ENCODE measurements at regions of chr3 and their contacts with region 1.

Region 1: DNA sequence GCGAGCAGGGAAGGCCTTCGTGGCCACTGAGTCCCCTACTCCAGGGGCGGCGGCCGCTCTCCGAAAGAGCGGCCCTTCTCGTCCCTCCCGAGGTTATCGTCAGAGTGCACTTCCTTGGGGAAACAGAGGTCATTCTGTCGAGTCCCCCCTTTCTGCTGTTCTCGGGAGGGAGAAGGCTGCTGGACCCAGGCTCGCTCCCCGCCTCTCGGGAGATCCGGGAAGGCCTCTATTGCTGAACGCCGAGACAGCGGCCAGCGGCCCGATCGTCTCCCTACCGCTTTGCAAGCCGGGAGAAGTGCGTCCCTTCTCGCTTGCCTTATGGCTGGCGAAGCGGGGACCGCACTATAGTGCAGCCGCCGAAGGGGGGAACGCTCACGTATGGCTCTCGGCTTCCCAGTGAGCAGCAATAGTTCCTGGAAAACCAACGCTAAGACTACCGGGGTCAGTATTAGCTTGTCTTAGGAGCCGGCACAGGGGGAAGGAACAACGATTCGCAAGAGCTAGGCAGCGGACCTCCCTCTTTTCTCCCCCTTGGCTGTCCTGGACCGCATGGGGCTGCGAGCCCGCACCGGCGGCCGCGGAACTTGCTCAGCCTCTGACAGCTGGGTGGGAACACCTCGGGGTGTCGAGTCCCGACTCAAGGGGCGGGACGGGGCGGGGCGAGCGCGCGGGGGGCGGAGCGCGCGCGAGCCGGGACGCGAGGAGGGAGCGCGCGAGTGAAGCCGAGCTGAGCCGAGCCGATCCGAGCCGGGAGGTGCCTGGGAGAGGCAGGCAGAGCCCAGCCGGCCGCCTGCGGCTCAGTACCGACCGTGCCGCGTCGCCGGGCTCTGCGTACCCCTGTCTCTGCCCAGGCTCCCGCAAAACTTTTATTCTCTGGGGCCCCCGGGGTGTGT is 930 bp upstream of the PPM1L start:
- DNase-seq: peak; percentile 80 to 95 (median 88)
- ATAC-seq: peak; percentile 85
- H3K4me3 ChIP-seq: peak overlapping the region; percentile 93
- H3K4me3 Mint-ChIP-seq: peak overlapping the region; percentile 94
- H3K27ac ChIP-seq: peak overlapping the region; percentile 51 to 81
- H3K27ac Mint-ChIP-seq: peak overlapping the region; percentile 89
- H3K4me1 ChIP-seq: peaks cover 27% of the 10 kb centered on the region
- H3K4me1 Mint-ChIP-seq: peaks cover 42% of the 10 kb centered on the region
- H3K27me3 ChIP-seq: peaks cover 7% of the 10 kb centered on the region in 2 experiments
- H3K27me3 Mint-ChIP-seq: peaks cover 21% of the 10 kb centered on the region
- CTCF ChIP-seq: no peak

Region 2: DNA sequence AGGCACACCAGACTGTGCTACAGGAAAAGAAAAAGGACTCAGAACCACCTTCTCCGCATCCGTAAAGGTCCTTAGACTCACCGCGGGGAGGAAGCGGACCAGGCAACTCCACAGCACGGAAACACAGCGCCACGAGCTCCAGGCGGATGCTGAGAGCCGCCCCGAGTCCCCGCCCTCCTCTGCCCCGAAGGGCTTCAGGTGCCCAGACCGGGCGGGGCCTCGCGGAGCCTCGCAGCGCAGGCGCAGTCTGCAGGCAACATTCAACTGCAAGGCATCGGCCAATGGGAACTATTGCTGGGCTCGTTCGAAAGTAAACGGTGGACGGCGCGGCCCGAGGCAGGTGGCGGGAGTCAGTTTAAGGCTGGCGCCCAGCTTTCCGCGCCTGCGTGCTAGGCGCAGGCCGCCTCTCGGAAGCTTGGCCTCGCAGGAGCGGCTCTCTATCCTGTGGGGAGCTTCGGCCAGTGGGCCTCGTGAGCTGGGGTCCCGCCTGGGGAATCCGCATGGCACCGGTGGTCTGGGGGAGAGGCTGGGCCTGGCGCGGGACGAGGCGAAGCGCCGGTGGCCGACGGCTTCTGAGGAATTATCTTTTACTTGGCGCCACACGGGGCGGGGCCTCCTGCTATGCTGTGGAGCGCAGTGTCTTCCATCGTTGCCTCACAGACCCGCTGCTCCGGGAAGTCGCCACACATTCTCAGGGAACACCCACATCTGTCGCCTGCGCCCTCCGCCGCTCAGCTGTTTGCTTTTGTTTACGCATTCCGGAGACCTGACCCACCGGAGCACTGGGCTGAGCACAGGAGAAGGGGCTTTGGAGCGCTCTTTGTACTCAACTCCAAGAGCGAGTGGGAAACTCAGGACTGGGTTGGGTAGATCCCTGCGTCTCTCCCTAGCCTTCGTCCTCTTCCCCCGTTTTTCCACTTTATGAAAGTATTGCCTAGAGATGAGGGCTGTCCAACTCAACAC is 305.2 kb before region 1 on chr3 and contains the start of gene TRIM59:
- CTCF ChIA-PET with region 1: no interaction called
- POLR2A ChIA-PET with region 1: interaction called, 9 read pairs
- intact Hi-C with region 1: loop called in 1 of 2 experiments (anchors 5 kb)
- DNase-seq: peak; percentile 91 to 99 (median 96)
- ATAC-seq: peak; percentile 97
- H3K4me3 ChIP-seq: peak within 1 kb of the TSS; percentile 81
- H3K4me3 Mint-ChIP-seq: peak within 1 kb of the TSS; percentile 95
- H3K27ac ChIP-seq: peak within 1 kb of the TSS; percentile 74 to 84
- H3K27ac Mint-ChIP-seq: peak within 1 kb of the TSS; percentile 95
- H3K4me1 ChIP-seq: peaks cover 22% of the 10 kb centered on the region
- H3K4me1 Mint-ChIP-seq: peaks cover 38% of the 10 kb centered on the region
- H3K27me3 ChIP-seq: no peaks in the 10 kb centered on the region
- H3K27me3 Mint-ChIP-seq: no peaks in the 10 kb centered on the region
- CTCF ChIP-seq: no peak
- total RNA-seq, gene TRIM59: 16.2 to 16.4 TPM

Region 3: GRCh38 chr3:161220850-161221753 is 466.0 kb after region 1 on chr3 and contains the start of gene NMD3:
- CTCF ChIA-PET with region 1: no interaction called
- POLR2A ChIA-PET with region 1: interaction called, 5 read pairs
- intact Hi-C with region 1: loop called in 1 of 2 experiments (anchors 5 kb)
- DNase-seq: peak; percentile 83 to 95 (median 88)
- ATAC-seq: peak; percentile 97
- H3K4me3 ChIP-seq: peak within 1 kb of the TSS; percentile 86
- H3K4me3 Mint-ChIP-seq: peak within 1 kb of the TSS; percentile 95
- H3K27ac ChIP-seq: peak within 1 kb of the TSS; percentile 73 to 77
- H3K27ac Mint-ChIP-seq: peak within 1 kb of the TSS; percentile 94
- H3K4me1 ChIP-seq: peaks cover 21% of the 10 kb centered on the region
- H3K4me1 Mint-ChIP-seq: peaks cover 46% of the 10 kb centered on the region
- H3K27me3 ChIP-seq: peaks cover 0 to 6% of the 10 kb centered on the region in 2 experiments
- H3K27me3 Mint-ChIP-seq: peaks cover 13% of the 10 kb centered on the region
- CTCF ChIP-seq: no peak
- total RNA-seq, gene NMD3: 58.4 to 60.1 TPM

Region 4: DNA sequence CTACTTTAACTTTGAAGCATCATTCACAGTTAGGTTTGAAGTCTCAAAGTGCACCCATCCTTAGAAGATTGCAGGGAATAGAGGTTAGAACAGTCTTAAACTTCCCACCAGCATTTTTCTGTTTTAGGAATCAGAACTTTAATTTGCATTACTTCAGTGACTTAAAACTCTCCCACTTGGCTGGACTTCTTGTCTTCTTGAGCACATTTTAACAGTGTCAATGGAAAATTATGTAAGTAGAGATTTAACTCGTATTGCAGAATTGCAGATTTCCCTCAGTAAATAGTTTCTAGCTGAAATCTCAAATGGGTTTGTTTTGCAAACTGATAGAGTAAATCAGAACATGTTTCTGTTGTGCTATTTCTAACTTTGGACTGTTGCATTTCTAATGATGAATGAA is 1111.1 kb after region 1 on chr3:
- CTCF ChIA-PET with region 1: no interaction called
- POLR2A ChIA-PET with region 1: no interaction called
- intact Hi-C with region 1: no loop called
- DNase-seq: no peak
- ATAC-seq: no peak
- H3K4me3 ChIP-seq: no peak overlapping the region
- H3K4me3 Mint-ChIP-seq: no peak overlapping the region
- H3K27ac ChIP-seq: no peak overlapping the region
- H3K27ac Mint-ChIP-seq: no peak overlapping the region
- H3K4me1 ChIP-seq: no peaks in the 10 kb centered on the region
- H3K4me1 Mint-ChIP-seq: no peaks in the 10 kb centered on the region
- H3K27me3 ChIP-seq: no peaks in the 10 kb centered on the region
- H3K27me3 Mint-ChIP-seq: no peaks in the 10 kb centered on the region
- CTCF ChIP-seq: no peak